H1 (cell line): ENCODE measurements at regions of chr7 and their contacts with region 1.

Region 1: GRCh38 chr7:26365077-26365900 is 73.6 kb downstream of the SNX10 start:
- DNase-seq: no peak
- H3K4me3 ChIP-seq: no peak overlapping the region
- H3K27ac ChIP-seq: no peak overlapping the region
- H3K4me1 ChIP-seq: no peaks in the 10 kb centered on the region; a peak in 1 of 7 replicates
- H3K27me3 ChIP-seq: no peaks in the 10 kb centered on the region
- CTCF ChIP-seq: peak in 2 of 3 experiments; percentile 64 to 73; a peak in 3 of 4 replicates
- EP300 ChIP-seq: no peak
- POLR2A ChIP-seq: no peak
- RAD21 ChIP-seq: peak; percentile 95 to 98

Region 2: GRCh38 chr7:25894902-25895791 is 470.1 kb before region 1 on chr7:
- CTCF ChIA-PET with region 1: interaction called, 96 read pairs
- POLR2A ChIA-PET with region 1: interaction called, 6 read pairs
- DNase-seq: peak in 1 of 2 experiments; percentile 87
- H3K4me3 ChIP-seq: peak overlapping the region; percentile 54 to 76 (median 62)
- H3K27ac ChIP-seq: no peak overlapping the region
- H3K4me1 ChIP-seq: peaks cover 0 to 7% (median 2%) of the 10 kb centered on the region in 4 experiments; a peak in 3 of 7 replicates
- H3K27me3 ChIP-seq: no peaks in the 10 kb centered on the region
- CTCF ChIP-seq: peak; percentile 50 to 65 (median 53)
- EP300 ChIP-seq: no peak
- POLR2A ChIP-seq: no peak
- RAD21 ChIP-seq: peak; percentile 15 to 43; a peak in 2 of 4 replicates

Region 3: DNA sequence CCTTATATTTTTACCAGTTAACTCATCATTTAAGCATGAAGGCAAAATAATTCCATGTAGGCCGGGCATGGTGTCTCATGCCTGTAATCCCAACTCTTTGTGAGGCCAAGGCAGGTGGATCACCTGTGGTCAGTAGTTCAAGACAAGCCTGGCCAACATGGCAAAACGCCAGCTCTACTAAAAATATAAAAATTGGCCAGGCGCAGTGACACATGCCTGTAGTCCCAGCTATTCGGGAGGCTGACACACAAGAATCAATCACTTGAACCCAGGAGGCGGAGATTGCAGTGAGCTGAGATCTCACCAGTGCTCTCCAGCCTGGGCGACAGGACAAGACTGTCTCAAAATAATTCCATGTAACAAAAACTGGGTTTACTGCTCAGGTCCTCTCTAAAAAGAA is 183.0 kb before region 1 on chr7:
- CTCF ChIA-PET with region 1: interaction called, 13 read pairs
- POLR2A ChIA-PET with region 1: interaction called, 14 read pairs
- DNase-seq: no peak
- H3K4me3 ChIP-seq: no peak overlapping the region
- H3K27ac ChIP-seq: no peak overlapping the region
- H3K4me1 ChIP-seq: peaks cover 0 to 5% (median 0%) of the 10 kb centered on the region in 4 experiments; a peak in 1 of 7 replicates
- H3K27me3 ChIP-seq: no peaks in the 10 kb centered on the region
- CTCF ChIP-seq: no peak
- EP300 ChIP-seq: no peak
- POLR2A ChIP-seq: no peak
- RAD21 ChIP-seq: no peak

Region 4: GRCh38 chr7:26346611-26347203 is 18.6 kb before region 1 on chr7:
- CTCF ChIA-PET with region 1: interaction called, 15 read pairs
- POLR2A ChIA-PET with region 1: no interaction called
- DNase-seq: no peak
- H3K4me3 ChIP-seq: no peak overlapping the region
- H3K27ac ChIP-seq: no peak overlapping the region; the same call in 1 of the 2 replicates
- H3K4me1 ChIP-seq: no peaks in the 10 kb centered on the region; a peak in 4 of 7 replicates
- H3K27me3 ChIP-seq: no peaks in the 10 kb centered on the region
- CTCF ChIP-seq: no peak
- EP300 ChIP-seq: no peak
- POLR2A ChIP-seq: no peak
- RAD21 ChIP-seq: no peak

Region 5: GRCh38 chr7:26500749-26501352 is 135.6 kb after region 1 on chr7:
- CTCF ChIA-PET with region 1: interaction called, 12 read pairs
- POLR2A ChIA-PET with region 1: no interaction called
- DNase-seq: no peak
- H3K4me3 ChIP-seq: no peak overlapping the region
- H3K27ac ChIP-seq: no peak overlapping the region
- H3K4me1 ChIP-seq: no peaks in the 10 kb centered on the region; a peak in 1 of 7 replicates
- H3K27me3 ChIP-seq: no peaks in the 10 kb centered on the region
- CTCF ChIP-seq: peak in 2 of 3 experiments; percentile 48 to 63; a peak in 3 of 4 replicates
- EP300 ChIP-seq: no peak
- POLR2A ChIP-seq: no peak
- RAD21 ChIP-seq: peak; percentile 67 to 77

Region 6: DNA sequence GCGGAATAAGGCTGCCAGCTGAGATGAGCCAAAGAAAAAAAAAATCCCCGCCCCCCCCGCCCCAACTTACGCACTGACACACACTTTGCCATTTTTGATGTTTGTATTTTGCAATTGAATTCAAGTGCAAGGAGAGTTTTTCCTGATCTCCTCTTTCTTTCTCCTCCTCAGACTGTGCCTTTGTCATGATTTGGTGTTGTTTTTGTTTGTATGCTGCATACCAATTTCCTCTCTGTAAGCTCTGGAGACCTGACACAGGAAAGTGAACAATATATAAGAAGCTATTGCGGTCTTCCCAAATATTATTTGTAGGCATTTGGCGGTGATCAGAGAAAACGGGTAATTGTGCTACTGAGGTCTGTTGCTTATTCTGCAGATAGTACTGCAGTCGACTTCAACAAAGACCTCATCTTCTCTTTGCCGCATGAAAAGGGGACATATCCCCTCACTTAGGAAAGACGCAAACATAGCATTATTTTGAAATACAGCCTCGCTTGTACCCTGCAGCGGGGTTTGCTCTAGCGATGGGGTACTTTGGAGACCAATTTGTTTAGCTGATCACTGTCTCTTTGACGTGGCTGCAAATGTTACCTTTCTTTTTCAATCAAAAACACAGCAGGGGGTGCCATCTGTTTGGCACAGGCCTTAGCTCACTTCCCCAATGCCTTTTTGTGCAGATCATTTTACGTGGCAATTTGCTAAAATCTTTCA is 292.6 kb after region 1 on chr7:
- CTCF ChIA-PET with region 1: interaction called, 59 read pairs
- POLR2A ChIA-PET with region 1: no interaction called
- DNase-seq: no peak
- H3K4me3 ChIP-seq: peak overlapping the region; percentile 1 to 49 (median 15); a peak in 6 of 8 replicates
- H3K27ac ChIP-seq: no peak overlapping the region
- H3K4me1 ChIP-seq: peaks cover 5 to 19% (median 16%) of the 10 kb centered on the region in 4 experiments
- H3K27me3 ChIP-seq: no peaks in the 10 kb centered on the region
- CTCF ChIP-seq: no peak
- EP300 ChIP-seq: peak in 1 of 2 experiments; percentile 13; a peak in 1 of 3 replicates
- POLR2A ChIP-seq: no peak
- RAD21 ChIP-seq: no peak

Region 7: DNA sequence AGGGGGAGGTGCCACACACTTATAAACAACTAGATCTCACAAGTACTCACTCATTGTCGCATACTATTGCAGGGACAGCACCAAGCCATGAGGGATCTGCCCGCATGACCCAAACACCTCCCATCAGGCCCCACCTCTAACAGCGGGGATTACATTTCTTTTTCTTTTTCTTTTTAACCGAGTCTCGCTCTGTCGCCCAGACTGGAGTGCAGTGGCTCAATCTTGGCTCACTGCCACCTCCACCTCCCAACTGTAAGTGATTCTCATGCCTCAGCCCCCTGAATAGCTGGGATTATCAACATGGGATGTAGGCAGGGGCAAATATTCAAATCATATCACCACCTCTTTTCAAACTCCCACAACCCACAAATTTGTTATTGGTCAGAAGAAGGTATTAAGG is 422.4 kb after region 1 on chr7:
- CTCF ChIA-PET with region 1: no interaction called
- POLR2A ChIA-PET with region 1: no interaction called
- DNase-seq: no peak
- H3K4me3 ChIP-seq: no peak overlapping the region
- H3K27ac ChIP-seq: no peak overlapping the region
- H3K4me1 ChIP-seq: peaks cover 0 to 4% (median 2%) of the 10 kb centered on the region in 4 experiments; a peak in 3 of 7 replicates
- H3K27me3 ChIP-seq: no peaks in the 10 kb centered on the region; a peak in 2 of 7 replicates
- CTCF ChIP-seq: no peak
- EP300 ChIP-seq: no peak
- POLR2A ChIP-seq: no peak
- RAD21 ChIP-seq: no peak

Region 8: DNA sequence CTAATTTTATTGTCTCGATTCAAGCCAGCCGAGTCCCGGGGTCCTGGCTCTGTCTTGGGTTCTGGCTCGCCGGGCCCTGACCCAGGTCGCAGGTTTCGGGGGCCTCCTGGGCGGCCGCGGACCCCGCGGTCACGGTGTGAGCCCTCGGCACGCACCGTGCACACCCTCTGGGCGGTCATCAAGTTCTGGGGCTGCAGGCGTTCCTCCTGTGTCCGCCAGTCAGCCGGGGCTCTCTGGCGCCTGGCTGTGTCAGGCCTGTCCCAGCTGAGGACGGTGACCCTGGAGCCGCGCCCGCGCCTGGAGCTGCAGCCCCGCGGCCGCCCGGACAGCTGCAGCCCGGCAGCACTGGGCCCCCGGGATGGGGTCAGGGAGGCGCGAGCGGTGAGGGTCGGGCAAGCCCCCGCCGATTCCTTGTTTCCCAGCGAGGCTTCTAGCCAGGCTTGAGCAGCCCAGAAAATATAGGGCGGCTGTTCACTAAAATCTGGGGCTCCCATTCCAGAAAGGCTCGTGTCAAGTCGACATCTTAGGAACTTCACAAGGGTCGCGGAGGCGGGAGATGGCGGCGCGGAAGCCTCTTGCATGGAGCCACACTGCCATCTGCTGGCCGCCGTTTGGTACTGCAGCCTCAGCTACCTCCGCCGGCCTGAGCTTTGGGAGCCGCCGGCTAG is 795.4 kb after region 1 on chr7:
- CTCF ChIA-PET with region 1: interaction called, 13 read pairs
- POLR2A ChIA-PET with region 1: no interaction called
- DNase-seq: peak; percentile 59 to 96
- H3K4me3 ChIP-seq: peak overlapping the region in 3 of 4 experiments; percentile 38 to 60 (median 45); a peak in 5 of 8 replicates
- H3K27ac ChIP-seq: no peak overlapping the region
- H3K4me1 ChIP-seq: peaks cover 0 to 2% (median 0%) of the 10 kb centered on the region in 4 experiments; a peak in 4 of 7 replicates
- H3K27me3 ChIP-seq: peaks cover 98 to 100% (median 99%) of the 10 kb centered on the region in 4 experiments
- CTCF ChIP-seq: peak; percentile 83 to 99 (median 91)
- EP300 ChIP-seq: no peak
- POLR2A ChIP-seq: no peak
- RAD21 ChIP-seq: peak; percentile 93 to 95